HEK293T (cell line): ENCODE measurements at regions of chr17 and their contacts with region 1.

Region 1: DNA sequence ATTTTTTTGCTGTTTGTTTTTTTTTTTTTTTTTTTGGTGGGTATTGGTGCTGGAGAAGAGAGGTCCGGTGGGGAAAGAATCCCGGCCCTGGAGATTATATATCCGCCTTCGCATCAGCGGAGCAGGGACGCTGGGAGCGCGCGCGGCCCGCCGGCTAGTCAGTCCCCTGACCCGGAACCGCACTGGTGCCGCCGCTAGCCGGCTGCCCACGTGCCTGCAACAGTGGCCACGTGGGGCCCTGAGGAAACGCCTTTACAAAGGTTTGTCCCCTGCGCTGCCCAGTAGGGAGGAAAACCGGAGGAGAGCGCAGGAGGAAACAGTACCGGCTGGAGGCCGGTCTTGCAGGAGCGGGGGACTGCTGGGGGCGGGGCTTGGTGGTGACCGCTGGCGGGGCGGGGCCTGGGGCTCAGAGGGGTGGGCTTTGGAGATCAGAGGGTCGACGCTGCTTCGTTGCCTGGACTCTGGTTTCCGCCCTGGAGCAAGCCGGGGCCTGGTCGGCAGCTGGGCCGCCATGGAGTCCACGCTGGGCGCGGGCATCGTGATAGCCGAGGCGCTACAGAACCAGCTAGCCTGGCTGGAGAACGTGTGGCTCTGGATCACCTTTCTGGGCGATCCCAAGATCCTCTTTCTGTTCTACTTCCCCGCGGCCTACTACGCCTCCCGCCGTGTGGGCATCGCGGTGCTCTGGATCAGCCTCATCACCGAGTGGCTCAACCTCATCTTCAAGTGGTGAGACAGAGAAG is at the start of gene G6PC3:
- DNase-seq: peak; percentile 92

Region 2: GRCh38 chr17:43878260-43879175 is 192.1 kb before region 1 on chr17:
- CTCF ChIA-PET with region 1: no interaction called
- POLR2A ChIA-PET with region 1: no interaction called
- DNase-seq: peak; percentile 91

Region 3: DNA sequence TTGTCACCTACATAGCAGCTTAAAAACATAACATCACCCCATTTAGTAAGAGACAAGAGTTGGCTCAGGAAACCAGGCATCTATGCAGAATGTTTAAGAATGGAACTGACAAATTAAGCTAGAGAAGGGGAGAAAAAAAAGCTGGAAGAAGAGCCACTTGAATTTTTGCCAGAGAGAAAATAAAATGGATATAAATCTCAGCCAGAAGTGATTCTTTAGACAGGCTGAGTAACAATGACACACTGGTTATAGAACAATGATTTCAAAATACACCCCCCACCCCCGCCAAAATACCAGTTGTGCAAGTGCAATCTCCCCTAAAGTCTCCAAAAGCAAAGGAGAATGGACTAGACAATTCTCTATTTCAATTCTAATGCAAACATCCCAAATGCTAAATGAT is 26.6 kb before region 1 on chr17:
- CTCF ChIA-PET with region 1: no interaction called
- POLR2A ChIA-PET with region 1: interaction called, 14 read pairs
- DNase-seq: no peak

Region 4: GRCh38 chr17:44053125-44053872 is 17.3 kb before region 1 on chr17:
- CTCF ChIA-PET with region 1: no interaction called
- POLR2A ChIA-PET with region 1: interaction called, 12 read pairs
- DNase-seq: no peak

Region 5: GRCh38 chr17:44086364-44087311 is 16.0 kb after region 1 on chr17:
- CTCF ChIA-PET with region 1: interaction called, 7 read pairs
- POLR2A ChIA-PET with region 1: interaction called, 10 read pairs
- DNase-seq: peak; percentile 37

Region 6: GRCh38 chr17:44110823-44111633 is 40.4 kb after region 1 on chr17:
- CTCF ChIA-PET with region 1: interaction called, 4 read pairs
- POLR2A ChIA-PET with region 1: interaction called, 12 read pairs
- DNase-seq: peak; percentile 77

Region 7: DNA sequence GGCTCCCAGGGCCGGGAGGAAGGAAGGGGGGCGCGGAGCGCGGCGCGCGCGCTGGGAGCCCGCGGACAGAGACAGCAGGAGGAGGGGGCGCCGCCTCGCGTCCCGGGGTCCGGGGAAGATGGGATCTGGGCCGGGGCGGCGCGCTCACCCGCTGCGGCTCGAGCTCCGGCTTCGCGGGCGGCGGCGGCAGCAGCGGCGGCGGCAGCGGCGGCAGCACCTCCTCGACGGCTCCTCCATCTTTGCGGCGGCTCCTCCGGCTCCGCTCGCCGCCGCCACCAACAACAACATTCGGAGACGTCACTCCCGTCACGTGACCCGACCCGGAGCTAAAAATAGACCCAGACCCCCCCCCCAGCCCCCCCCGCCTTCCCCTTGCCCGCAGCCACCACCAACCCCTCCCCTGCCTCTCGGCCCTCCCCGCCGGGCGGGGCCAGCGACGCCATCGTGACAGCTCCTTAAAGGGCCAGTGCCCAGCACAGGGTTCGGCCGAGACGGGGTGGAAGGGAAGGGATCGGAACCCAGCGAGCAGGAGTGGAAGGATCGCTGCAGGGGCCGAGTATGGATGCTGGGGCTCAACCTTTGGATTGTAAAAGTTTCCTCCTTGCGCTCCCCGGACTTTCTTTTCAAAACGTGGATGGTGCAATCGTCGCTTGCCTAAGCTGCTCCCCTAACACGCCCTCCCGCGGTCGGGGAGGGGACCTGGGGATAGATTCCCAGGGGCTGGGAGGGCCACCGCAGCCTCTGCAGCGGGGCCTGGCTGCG is 52.9 kb after region 1 on chr17 and contains the start of gene HDAC5:
- CTCF ChIA-PET with region 1: no interaction called
- POLR2A ChIA-PET with region 1: interaction called, 14 read pairs
- DNase-seq: peak; percentile 95

Region 8: DNA sequence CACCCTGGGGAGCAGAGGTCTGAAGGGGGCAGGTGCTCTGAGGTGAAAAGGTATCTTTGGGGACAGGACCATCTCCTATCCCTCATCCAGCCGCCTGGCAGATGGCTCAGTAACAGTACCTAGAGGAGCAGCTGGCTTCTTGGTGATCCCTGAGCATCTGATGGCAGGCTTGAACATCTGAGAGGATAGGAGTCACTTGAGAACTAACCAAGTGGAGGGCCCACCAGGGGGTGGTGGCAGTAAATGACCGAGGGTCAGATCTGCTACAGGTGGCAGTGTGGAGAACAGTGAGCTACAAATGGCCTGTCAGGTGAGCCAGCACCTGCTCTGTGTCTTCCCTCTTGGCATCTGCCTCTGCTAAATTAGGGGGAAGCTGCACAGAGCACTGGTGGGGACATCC is 84.9 kb after region 1 on chr17:
- CTCF ChIA-PET with region 1: no interaction called
- POLR2A ChIA-PET with region 1: no interaction called
- DNase-seq: no peak